ENCODE measurements at regions of chr13 and their contacts with region 1.

Region 1: GRCh38 chr13:113337556-113337955 is 26.4 kb downstream of the GRTP1 start:
- DNase-seq: no peak
- H3K4me3 ChIP-seq: no peak overlapping the region
- H3K27ac ChIP-seq: no peak overlapping the region
- H3K4me1 ChIP-seq: no peaks in the 10 kb centered on the region
- H3K27me3 ChIP-seq: no peaks in the 10 kb centered on the region
- CTCF ChIP-seq: no peak
- POLR2A ChIP-seq: no peak

Region 2: GRCh38 chr13:112725346-112726015 is 612.1 kb before region 1 on chr13:
- intact Hi-C with region 1: no loop called
- DNase-seq: no peak
- H3K4me3 ChIP-seq: no peak overlapping the region
- H3K27ac ChIP-seq: no peak overlapping the region
- H3K4me1 ChIP-seq: peaks cover 0 to 43% (median 3%) of the 10 kb centered on the region in 3 donors
- H3K27me3 ChIP-seq: no peaks in the 10 kb centered on the region
- CTCF ChIP-seq: no peak
- POLR2A ChIP-seq: no peak

Region 3: DNA sequence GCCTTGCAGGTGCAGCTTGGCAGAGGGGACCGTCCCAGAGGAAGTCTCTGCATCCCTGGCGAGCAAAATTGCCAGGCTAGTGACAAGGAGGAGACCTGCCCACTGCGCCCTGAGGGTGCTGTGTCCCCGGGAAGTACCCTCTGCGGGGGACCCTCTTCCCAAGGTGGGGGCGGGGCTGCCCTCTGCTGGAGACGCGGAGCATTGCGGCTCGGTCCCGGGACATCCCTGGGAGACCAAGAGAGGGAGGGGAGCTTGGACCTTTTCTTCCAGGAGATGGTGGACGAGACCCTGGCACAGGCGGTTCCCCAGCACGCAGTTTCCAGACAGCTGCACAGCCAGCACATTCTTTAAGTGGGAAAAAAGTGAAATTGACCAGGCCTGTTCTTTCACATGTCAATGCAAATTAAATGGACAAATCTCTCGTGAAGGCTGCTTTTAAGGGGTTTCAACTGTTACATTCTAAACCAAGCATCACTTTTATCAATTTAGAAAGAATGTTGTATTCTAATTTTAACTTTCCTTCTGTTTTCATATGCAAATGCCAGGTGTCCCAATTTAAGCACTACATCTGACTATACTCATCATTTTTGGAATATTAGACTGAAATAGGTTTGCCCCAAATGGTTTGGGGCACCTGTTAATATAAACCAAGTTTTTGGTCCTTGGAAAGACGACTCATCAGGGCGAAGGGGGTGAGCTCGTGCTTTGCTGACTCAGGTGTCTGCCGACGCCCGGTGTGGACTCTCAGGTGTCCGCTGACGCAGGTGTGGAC is 307.9 kb before region 1 on chr13:
- intact Hi-C with region 1: no loop called
- DNase-seq: no peak
- H3K4me3 ChIP-seq: no peak overlapping the region
- H3K27ac ChIP-seq: no peak overlapping the region
- H3K4me1 ChIP-seq: peaks cover 0 to 6% (median 0%) of the 10 kb centered on the region in 3 donors
- H3K27me3 ChIP-seq: peaks cover 0 to 7% (median 0%) of the 10 kb centered on the region in 4 donors
- CTCF ChIP-seq: peak; percentile 50 to 85 (median 76)
- POLR2A ChIP-seq: no peak

Region 4: DNA sequence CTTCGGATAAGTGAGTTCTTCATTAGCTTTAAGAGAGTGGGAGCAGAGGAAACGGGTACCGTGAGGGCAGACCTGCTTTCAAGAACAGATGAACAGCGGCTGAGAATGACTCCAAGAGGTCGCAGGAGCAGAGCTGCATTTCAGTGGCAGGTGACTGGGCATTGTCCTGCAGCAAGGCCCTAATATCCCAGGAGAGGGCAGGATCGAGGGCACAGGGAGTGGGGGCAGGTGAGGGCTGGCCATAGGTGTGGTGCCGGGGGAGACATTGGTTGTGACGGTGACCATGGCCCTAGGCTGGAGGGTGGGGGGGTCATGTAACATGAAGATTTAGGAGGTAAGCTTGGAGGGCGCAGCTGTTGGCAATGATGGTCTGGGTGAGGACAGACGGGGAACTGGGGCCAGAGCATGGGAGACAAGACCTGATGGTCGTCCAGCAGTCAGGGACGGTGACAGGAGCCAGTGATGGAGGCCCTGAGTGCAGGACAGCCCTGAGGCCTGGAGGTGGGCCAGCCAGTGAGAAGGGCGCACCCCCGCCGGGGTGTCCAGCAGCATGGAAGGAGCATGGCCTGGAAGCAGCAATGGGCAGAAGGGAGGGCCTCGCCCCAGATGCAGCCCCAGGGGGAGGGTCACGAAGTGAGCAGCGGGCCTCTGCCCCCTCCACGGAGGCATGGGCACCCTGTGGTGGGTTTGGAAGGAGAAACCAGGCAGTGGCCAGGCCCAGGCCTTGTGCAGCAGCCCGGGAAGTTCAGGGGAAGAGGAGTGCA is 69.7 kb before region 1 on chr13:
- intact Hi-C with region 1: loop called (anchors 5 kb)
- DNase-seq: no peak
- H3K4me3 ChIP-seq: no peak overlapping the region
- H3K27ac ChIP-seq: no peak overlapping the region
- H3K4me1 ChIP-seq: no peaks in the 10 kb centered on the region
- H3K27me3 ChIP-seq: no peaks in the 10 kb centered on the region
- CTCF ChIP-seq: no peak
- POLR2A ChIP-seq: no peak

Measured in esophagus squamous epithelium (tissue), 5 donors.